K562 (cell line): ENCODE measurements at regions of chr3 and their contacts with region 1.

Region 1: GRCh38 chr3:136955813-136956212 is 2.0 kb upstream of the IL20RB start:
- DNase-seq: peak in 1 of 4 experiments; percentile 22
- ATAC-seq: peak; percentile 19; the same call in 1 of the 3 replicates
- H3K4me3 ChIP-seq: no peak overlapping the region
- H3K27ac ChIP-seq: no peak overlapping the region
- H3K4me1 ChIP-seq: peaks cover 0 to 17% of the 10 kb centered on the region in 2 experiments; a peak in 3 of 5 replicates
- H3K27me3 ChIP-seq: no peaks in the 10 kb centered on the region
- CTCF ChIP-seq: no peak
- EP300 ChIP-seq: no peak
- POLR2A ChIP-seq: no peak
- RAD21 ChIP-seq: no peak

Region 2: GRCh38 chr3:136778865-136779264 is 176.9 kb before region 1 on chr3:
- CTCF ChIA-PET with region 1: no interaction called
- POLR2A ChIA-PET with region 1: no interaction called
- in situ Hi-C with region 1: no loop called
- intact Hi-C with region 1: no loop called
- DNase-seq: no peak
- ATAC-seq: no peak
- H3K4me3 ChIP-seq: no peak overlapping the region
- H3K27ac ChIP-seq: no peak overlapping the region
- H3K4me1 ChIP-seq: no peaks in the 10 kb centered on the region
- H3K27me3 ChIP-seq: no peaks in the 10 kb centered on the region
- CTCF ChIP-seq: no peak
- EP300 ChIP-seq: no peak
- POLR2A ChIP-seq: no peak
- RAD21 ChIP-seq: no peak

Region 3: GRCh38 chr3:136861890-136862616 is 93.8 kb before region 1 on chr3 and contains the start of gene NCK1:
- CTCF ChIA-PET with region 1: no interaction called
- POLR2A ChIA-PET with region 1: no interaction called
- in situ Hi-C with region 1: no loop called
- intact Hi-C with region 1: loop called (anchors 5 kb)
- DNase-seq: peak; percentile 93 to 96 (median 94)
- ATAC-seq: peak; percentile 96
- H3K4me3 ChIP-seq: peak within 1 kb of the TSS; percentile 97
- H3K27ac ChIP-seq: peak within 1 kb of the TSS; percentile 94
- H3K4me1 ChIP-seq: peaks cover 8 to 16% of the 10 kb centered on the region in 2 experiments; a peak in 4 of 5 replicates
- H3K27me3 ChIP-seq: no peaks in the 10 kb centered on the region
- CTCF ChIP-seq: no peak; a peak in 1 of 6 replicates
- EP300 ChIP-seq: no peak
- POLR2A ChIP-seq: peak; percentile 88
- RAD21 ChIP-seq: no peak
- polyA plus RNA-seq, gene NCK1: 17.3 to 24.4 TPM